ENCODE measurements at regions of chr18 and their contacts with region 1.

Region 1: DNA sequence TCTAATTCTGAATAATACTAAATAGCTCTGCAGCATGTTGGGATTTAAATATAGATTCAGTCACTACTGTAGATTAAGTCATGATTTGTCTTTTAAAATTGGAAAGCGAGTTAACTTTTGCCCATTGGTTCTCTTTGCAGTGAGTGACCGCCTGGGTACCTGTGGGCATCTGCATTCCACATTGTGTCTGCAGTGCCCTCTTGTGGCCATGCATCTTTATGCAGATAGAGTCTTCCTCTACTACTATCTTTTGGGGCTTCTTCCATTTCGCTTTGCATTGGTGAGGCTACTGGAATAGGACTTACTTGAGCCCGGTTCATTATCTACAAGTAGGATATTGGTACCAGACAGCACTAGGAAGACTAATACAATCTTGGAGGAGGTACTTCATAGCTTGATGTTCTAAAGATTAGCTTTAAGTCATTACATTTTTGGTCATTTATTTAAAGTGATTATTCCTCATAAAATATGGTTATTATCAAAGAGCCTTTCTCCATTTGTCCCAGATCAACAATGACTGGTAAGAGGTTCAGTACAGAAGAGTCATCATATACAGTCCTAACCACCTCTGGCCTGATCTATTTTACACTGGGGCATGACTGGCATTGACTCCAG is 203.0 kb downstream of the SOCS6 start:
- H3K4me3 ChIP-seq: no peak overlapping the region
- H3K27ac ChIP-seq: no peak overlapping the region
- H3K4me1 ChIP-seq: peaks cover 2% of the 10 kb centered on the region; the same call in 1 of the 2 replicates
- CTCF ChIP-seq: peak; percentile 34

Region 2: DNA sequence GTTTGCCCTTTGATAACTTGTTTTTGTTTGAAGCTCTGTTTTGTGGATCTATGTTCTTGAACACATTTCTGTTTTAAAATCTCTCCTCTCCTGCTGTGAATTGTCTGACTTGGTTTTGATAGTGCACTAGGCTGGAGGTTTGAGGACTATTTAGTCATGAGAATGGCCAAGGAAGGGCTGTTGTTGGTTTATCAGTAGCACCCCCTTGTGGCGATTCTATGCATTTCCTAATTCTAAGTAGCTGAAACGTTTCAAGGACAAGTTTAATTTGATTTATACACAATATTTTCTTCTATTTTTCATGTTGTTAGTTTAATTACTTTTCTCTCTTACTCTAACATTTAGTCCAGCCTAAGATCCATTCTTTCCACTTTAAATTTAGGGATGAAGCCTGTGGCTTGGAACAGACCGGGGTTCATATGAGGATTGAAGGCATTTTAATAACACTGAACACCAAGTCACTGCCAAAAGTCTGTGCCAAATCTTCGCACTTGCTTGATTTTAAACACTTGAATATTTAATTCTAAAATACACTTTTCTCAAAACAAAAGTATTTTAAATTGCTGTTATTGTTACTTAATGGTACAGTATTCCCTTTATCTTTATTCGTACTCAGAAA is 37.0 kb before region 1 on chr18:
- CTCF ChIA-PET with region 1: interaction called, 23 read pairs
- POLR2A ChIA-PET with region 1: no interaction called
- H3K4me3 ChIP-seq: no peak overlapping the region
- H3K27ac ChIP-seq: no peak overlapping the region
- H3K4me1 ChIP-seq: no peaks in the 10 kb centered on the region
- CTCF ChIP-seq: peak; percentile 56

Region 3: DNA sequence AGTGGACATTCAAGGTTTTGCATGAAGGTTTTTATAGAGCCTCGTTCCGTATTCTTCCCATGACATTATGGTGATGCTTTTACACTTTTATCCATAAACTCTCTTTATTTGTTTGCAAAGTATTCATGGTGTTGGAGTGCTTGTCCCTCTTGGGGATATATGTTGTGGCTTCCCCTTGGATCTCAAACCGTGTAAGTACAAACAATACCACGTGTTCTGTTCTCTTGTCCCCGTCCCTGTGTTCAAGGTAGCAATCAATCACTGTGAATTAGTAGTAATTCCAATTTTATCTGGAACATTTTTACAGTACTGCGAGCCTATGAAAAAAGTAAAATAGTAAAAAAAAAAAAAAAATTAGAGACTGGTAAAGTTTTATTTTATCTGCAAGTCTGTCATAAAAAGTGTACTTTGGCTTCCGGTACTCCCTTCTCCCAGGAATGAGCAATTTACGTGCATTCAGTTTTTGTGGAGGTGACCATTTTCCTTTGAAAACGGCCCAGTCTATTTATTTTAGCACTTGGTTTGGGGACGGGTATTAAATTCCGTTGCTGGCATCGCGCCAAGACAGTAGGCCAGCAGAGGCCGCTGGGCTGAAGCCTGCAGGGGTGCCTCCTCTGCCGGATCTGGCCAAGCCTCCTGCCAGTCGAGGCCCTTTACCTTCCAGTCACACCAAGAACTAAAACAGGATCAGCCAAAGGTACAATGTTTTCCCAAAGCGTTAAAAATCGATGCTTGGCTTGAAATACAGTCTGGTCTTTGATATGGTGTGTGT is 27.3 kb before region 1 on chr18:
- CTCF ChIA-PET with region 1: interaction called, 28 read pairs
- POLR2A ChIA-PET with region 1: no interaction called
- H3K4me3 ChIP-seq: peak overlapping the region; percentile 27
- H3K27ac ChIP-seq: peak overlapping the region; percentile 74
- H3K4me1 ChIP-seq: peaks cover 8% of the 10 kb centered on the region
- CTCF ChIP-seq: peak; percentile 38; the same call in 1 of the 2 replicates

Region 4: GRCh38 chr18:70469916-70470315 is 21.9 kb before region 1 on chr18:
- CTCF ChIA-PET with region 1: interaction called, 84 read pairs
- POLR2A ChIA-PET with region 1: no interaction called
- H3K4me3 ChIP-seq: no peak overlapping the region
- H3K27ac ChIP-seq: no peak overlapping the region
- H3K4me1 ChIP-seq: no peaks in the 10 kb centered on the region
- CTCF ChIP-seq: no peak

Region 5: GRCh38 chr18:70506511-70506910 is 14.7 kb after region 1 on chr18:
- CTCF ChIA-PET with region 1: interaction called, 48 read pairs
- POLR2A ChIA-PET with region 1: no interaction called
- H3K4me3 ChIP-seq: no peak overlapping the region
- H3K27ac ChIP-seq: no peak overlapping the region
- H3K4me1 ChIP-seq: no peaks in the 10 kb centered on the region
- CTCF ChIP-seq: no peak

Region 6: DNA sequence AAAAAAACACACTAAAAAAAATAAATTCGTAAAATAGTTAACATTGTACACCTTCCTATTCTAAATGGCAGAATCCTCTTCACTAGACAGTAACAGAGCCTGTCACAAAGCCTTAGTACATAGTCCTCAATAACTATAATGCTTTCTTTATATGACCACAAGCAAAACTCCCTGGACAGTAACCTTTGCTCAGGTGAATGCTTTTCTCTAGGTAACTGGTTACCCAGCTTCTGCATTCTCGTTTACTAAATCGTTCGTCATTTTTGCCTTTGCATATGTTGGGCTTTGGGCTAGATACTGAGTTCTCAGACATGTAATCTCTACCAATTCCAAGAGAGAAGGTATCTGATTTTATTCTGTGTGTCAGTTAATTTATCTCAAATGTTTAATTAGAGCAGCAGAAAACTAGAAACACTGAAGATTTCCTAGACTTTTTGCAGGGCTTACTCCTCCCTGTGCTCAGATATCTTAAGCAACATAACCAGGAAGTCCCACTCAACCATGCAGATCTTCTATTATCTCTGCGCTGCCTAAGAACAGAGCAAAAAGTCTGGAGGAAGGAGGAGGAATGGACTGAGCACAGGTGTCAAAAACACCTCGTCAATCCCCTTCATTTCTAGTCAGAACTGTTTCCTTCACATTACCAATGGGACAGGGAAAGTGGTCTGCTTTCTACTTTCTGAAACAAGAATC is 44.7 kb after region 1 on chr18:
- CTCF ChIA-PET with region 1: interaction called, 11 read pairs
- POLR2A ChIA-PET with region 1: no interaction called
- H3K4me3 ChIP-seq: no peak overlapping the region
- H3K27ac ChIP-seq: no peak overlapping the region
- H3K4me1 ChIP-seq: no peaks in the 10 kb centered on the region
- CTCF ChIP-seq: no peak

Measured in HEK293 (cell line).